ENCODE measurements at regions of chr14 and their contacts with region 1.

Region 1: DNA sequence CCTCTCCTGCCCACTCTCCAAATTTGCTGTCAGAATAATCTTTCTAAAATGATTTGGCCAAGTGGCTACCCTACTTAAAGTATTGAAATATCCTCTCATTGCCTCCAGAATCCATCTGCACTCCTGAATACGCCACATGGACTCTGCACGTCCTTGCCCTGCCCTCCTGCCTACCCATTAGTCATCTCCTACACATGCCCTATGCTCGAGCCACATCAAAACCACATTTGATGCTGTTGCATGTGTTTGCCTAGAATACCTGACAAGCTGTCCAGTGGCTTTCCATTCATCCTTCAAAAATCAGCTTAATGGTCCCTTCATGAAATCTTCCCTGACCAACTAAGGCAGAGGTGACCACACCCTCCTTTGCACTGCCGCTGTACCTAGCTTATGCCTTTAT is 17.0 kb downstream of the VCPKMT start:
- DNase-seq: peak; percentile 86
- H3K4me3 ChIP-seq: no peak overlapping the region
- H3K27ac ChIP-seq: peak overlapping the region; percentile 23
- H3K4me1 ChIP-seq: peaks cover 16% of the 10 kb centered on the region
- H3K27me3 ChIP-seq: no peaks in the 10 kb centered on the region
- CTCF ChIP-seq: no peak

Region 2: DNA sequence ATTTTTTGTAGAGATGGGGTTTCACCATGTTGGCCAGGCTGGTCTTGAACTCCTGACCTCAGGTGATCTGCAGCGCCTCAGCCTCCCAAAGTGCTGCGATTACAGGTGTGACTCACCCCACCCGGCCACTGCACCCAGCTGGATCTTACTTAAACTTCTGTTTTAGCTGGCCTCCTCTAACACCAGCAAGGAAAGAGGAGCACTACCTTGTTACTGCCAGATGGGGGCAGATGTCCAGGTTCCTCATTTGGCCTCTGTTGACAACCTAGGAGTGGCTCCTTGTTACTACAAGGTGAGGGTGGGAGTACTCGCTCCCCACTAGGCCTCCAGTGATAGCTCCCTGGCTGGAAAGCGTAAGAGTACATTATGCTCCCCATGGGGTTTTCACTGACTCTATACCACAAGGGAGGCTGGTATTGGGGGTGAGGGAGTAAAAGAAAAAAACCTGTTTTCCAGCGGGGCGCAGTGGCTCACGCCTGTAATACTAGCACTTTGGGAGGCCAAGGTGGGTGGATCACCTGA is 219.6 kb before region 1 on chr14:
- CTCF ChIA-PET with region 1: no interaction called
- dilution Hi-C with region 1: no loop called
- in situ Hi-C with region 1: loop called in 1 of 2 experiments (anchors 10 kb)
- intact Hi-C with region 1: no loop called
- DNase-seq: peak; percentile 63
- H3K4me3 ChIP-seq: no peak overlapping the region
- H3K27ac ChIP-seq: no peak overlapping the region
- H3K4me1 ChIP-seq: peaks cover 7% of the 10 kb centered on the region
- H3K27me3 ChIP-seq: no peaks in the 10 kb centered on the region
- CTCF ChIP-seq: peak; percentile 66 to 69

Region 3: DNA sequence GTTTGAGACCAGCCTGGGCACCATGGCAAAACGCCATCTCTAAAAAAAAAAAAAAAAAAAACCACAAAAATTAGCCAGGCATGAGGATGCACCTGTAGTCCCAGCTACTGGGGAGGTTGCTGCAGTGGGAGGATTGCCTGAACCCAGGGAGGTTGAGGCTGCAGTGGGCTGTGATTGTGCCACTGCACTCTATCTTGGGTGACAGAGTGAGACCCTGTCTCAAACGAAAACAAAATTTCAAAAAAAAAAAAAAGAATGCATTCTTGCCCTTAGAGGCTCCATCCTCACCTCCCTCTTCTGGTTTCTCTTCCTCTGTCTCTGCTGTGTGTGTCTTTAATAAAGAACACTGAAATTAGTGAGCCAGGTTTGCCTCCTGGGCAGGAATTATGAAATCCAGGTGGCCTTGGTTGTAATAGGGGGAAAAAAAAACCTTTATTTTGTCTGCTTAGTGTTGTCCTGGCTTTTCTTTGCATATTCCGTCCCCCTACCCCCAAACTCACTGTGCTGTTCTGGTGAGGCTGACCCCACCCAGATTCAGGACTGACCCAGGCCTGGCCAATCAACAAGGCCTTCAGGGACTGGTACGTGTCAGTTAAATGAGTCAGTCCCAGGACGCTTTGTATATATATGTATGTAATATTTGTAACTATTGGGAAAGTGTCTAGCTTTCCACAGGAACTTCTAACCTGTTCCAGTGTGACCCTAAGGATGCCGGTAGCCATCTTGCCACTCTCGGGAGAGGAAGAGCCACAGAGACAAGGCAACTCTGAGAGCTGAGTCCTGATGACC is 90.6 kb before region 1 on chr14:
- CTCF ChIA-PET with region 1: no interaction called
- dilution Hi-C with region 1: loop called (anchors 5 kb)
- in situ Hi-C with region 1: no loop called
- intact Hi-C with region 1: loop called (anchors 2 kb)
- DNase-seq: peak; percentile 94
- H3K4me3 ChIP-seq: no peak overlapping the region
- H3K27ac ChIP-seq: peak overlapping the region; percentile 96
- H3K4me1 ChIP-seq: peaks cover 55% of the 10 kb centered on the region
- H3K27me3 ChIP-seq: no peaks in the 10 kb centered on the region
- CTCF ChIP-seq: no peak

Region 4: GRCh38 chr14:50051086-50051485 is 48.2 kb before region 1 on chr14:
- CTCF ChIA-PET with region 1: no interaction called
- dilution Hi-C with region 1: loop called (anchors 5 kb)
- in situ Hi-C with region 1: no loop called
- intact Hi-C with region 1: no loop called
- DNase-seq: peak; percentile 61
- H3K4me3 ChIP-seq: no peak overlapping the region
- H3K27ac ChIP-seq: no peak overlapping the region
- H3K4me1 ChIP-seq: peaks cover 6% of the 10 kb centered on the region
- H3K27me3 ChIP-seq: no peaks in the 10 kb centered on the region
- CTCF ChIP-seq: no peak

Region 5: DNA sequence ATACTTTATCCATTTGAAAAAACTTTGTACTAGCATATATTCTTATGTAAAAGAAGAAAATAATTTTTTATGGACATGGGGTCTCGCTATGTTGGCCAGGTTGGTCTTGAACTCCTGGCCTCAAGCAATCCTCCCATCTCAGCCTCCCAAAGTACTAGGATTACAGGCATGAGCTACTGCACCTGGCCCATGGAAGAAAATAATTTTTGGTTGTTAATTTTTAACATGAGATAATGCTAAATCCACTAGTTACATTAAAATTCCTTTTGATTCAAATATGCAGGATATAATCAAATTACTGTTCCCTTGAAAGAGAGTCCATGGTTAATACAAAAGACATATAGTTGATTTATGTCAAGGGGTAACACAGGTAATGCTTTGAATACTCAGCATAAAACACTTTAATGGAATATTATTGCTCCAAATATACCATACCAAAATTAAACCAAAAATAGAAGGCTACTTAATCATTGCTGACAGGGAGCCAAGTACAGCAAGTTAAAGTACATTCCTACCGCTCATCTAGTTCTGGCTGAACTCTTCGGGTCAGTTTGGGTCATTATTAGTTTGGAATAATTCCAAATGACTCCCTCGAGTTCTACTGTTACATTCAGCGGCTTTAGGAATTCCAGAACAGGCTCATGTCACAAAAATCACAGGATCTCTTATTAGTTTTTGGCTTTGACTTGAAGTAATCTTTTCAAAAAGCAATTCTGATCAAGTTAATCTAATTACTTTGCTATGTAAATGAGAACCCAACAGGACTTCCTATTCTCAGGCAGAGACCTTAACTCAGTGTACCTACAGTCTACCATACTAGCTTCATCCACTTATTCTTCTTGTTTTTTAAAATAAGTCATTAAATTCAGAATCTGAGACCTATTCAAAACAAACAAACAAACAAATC is 126.0 kb after region 1 on chr14:
- CTCF ChIA-PET with region 1: no interaction called
- dilution Hi-C with region 1: no loop called
- in situ Hi-C with region 1: no loop called
- intact Hi-C with region 1: no loop called
- DNase-seq: peak; percentile 64
- H3K4me3 ChIP-seq: peak overlapping the region in 1 of 3 experiments; percentile 28
- H3K27ac ChIP-seq: no peak overlapping the region
- H3K4me1 ChIP-seq: peaks cover 16% of the 10 kb centered on the region
- H3K27me3 ChIP-seq: no peaks in the 10 kb centered on the region
- CTCF ChIP-seq: no peak

Region 6: DNA sequence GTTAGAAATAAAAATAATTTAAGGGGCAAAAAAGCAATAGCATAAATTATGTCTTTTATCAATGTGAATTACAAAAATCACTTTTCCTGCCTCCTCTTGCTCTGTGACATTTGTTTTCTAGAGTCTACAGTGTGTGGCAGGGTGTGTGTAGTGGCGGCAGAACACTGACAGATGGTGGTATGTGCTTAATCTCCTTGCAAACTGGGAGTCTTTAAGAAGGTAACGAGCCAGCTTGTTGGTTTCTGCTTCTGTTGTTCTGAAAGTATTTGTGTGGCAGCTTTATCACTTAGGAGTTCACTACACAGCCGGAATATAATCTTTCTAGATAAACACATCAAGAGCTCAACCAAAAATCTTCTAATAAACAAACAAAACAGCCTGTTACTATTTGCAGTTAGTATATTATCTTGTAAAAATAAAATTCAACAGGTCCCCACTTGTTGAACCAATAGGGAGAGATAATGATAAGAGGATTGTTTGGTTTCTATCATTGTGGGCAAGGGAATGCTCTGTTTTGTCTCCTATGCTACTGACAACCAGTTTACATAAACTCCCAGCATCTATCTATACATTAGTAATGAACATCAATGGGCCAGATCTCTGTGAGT is 284.4 kb after region 1 on chr14:
- CTCF ChIA-PET with region 1: no interaction called
- dilution Hi-C with region 1: no loop called
- in situ Hi-C with region 1: no loop called
- intact Hi-C with region 1: no loop called
- DNase-seq: no peak
- H3K4me3 ChIP-seq: no peak overlapping the region
- H3K27ac ChIP-seq: no peak overlapping the region
- H3K4me1 ChIP-seq: no peaks in the 10 kb centered on the region
- H3K27me3 ChIP-seq: no peaks in the 10 kb centered on the region
- CTCF ChIP-seq: no peak

Measured in mammary epithelial cell (primary cell).